Endothelial cell of umbilical vein (primary cell): ENCODE measurements at regions of chr4 and their contacts with region 1.

Region 1: GRCh38 chr4:151227731-151228130 is 49.2 kb upstream of the PRSS48 start:
- DNase-seq: peak; percentile 99
- H3K4me3 ChIP-seq: peak overlapping the region; percentile 2 to 79 (median 38)
- H3K27ac ChIP-seq: peak overlapping the region; percentile 80
- H3K4me1 ChIP-seq: peaks cover 33% of the 10 kb centered on the region
- H3K27me3 ChIP-seq: no peaks in the 10 kb centered on the region
- CTCF ChIP-seq: no peak
- POLR2A ChIP-seq: peak; percentile 71

Region 2: DNA sequence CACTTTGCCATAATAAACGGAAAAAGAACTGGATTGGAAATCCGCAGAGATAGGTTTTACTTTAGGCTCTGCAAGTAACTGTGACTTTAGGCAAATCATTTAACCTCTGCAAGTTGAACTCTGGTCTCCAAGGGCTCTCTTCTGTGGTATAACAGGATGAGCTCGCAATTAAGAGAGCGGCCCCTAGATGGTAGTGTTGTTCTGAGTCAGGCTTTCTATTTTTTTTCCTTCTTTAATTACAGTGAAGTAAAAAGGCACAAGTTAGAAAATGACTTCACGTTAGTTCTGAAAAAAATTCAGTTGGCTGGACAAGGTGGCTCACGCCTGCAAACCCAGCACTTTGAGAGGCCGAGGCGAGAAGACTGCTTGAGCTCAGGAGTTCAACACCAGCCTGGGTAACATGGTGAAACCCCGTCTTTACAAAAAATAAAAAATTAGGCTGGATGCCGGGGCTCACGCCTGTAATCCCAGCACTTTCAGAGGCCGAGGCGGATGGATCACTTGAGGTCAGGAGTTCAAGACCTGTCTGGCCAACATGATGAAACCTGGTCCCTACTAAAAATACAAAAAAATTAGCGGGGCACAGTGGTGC is 110.3 kb before region 1 on chr4:
- CTCF ChIA-PET with region 1: interaction called, 6 read pairs
- POLR2A ChIA-PET with region 1: no interaction called
- dilution Hi-C with region 1: no loop called
- intact Hi-C with region 1: loop called (anchors 1 kb)
- DNase-seq: peak; percentile 86
- H3K4me3 ChIP-seq: no peak overlapping the region
- H3K27ac ChIP-seq: no peak overlapping the region
- H3K4me1 ChIP-seq: no peaks in the 10 kb centered on the region
- H3K27me3 ChIP-seq: no peaks in the 10 kb centered on the region
- CTCF ChIP-seq: peak; percentile 53 to 61
- POLR2A ChIP-seq: no peak

Region 3: DNA sequence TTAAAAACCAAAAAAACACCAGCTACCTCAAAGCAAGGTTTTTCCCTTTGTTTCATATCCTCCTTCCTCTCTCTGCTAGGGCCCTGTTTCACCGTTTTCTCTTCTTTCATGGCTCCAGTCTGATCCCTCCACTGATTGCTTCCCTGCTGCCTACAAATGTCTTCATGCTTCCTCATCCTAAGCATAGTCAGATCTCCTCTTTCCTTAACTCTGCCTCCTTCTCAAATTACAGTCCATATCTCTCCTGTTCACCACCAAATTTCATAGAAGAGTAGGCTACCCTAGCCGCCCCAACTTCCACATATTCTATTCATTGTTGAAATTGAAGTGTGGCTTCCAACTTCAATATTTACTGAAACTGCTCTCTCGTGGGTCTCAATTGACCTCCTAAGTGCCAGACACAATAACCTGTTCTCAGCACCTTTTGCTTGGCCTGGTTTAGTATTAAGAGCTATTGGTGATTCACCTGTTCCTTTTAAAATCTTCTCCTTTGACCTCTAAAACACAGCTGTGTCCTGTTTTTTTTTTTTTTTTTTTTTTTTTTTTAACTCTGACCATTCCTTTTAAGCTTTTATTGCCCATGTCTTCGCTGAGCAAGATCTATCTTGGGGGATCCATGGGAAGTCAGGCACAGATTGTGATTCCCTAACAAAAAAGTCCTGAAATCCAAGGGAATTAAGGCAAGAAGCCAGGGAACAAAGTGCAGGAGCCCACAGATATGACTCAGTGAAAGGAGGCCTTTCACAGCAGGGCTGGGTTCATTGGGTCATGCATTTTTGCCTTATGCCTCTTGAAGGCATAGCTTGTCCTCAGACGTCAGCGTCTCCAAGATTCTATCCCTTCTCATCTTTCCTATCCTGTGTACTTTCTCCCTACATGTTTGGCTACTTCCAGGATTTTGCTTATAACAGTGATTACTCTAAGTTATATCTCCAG is 42.9 kb before region 1 on chr4:
- CTCF ChIA-PET with region 1: no interaction called
- POLR2A ChIA-PET with region 1: no interaction called
- dilution Hi-C with region 1: no loop called
- intact Hi-C with region 1: loop called (anchors 5 kb)
- DNase-seq: peak; percentile 89
- H3K4me3 ChIP-seq: no peak overlapping the region
- H3K27ac ChIP-seq: no peak overlapping the region
- H3K4me1 ChIP-seq: peaks cover 11% of the 10 kb centered on the region
- H3K27me3 ChIP-seq: no peaks in the 10 kb centered on the region
- CTCF ChIP-seq: no peak
- POLR2A ChIP-seq: no peak

Region 4: GRCh38 chr4:151215295-151215694 is 12.4 kb before region 1 on chr4:
- CTCF ChIA-PET with region 1: interaction called, 6 read pairs
- POLR2A ChIA-PET with region 1: interaction called, 3 read pairs
- dilution Hi-C with region 1: no loop called
- intact Hi-C with region 1: loop called (anchors 1 kb)
- DNase-seq: peak; percentile 97
- H3K4me3 ChIP-seq: no peak overlapping the region
- H3K27ac ChIP-seq: peak overlapping the region; percentile 38
- H3K4me1 ChIP-seq: peaks cover 34% of the 10 kb centered on the region
- H3K27me3 ChIP-seq: no peaks in the 10 kb centered on the region
- CTCF ChIP-seq: no peak
- POLR2A ChIP-seq: peak; percentile 40

Region 5: GRCh38 chr4:151325111-151325948 is 97.6 kb after region 1 on chr4 and contains the start of gene SH3D19:
- CTCF ChIA-PET with region 1: interaction called, 4 read pairs
- POLR2A ChIA-PET with region 1: interaction called, 3 read pairs
- dilution Hi-C with region 1: no loop called
- intact Hi-C with region 1: loop called (anchors 1 kb)
- DNase-seq: peak; percentile 91
- H3K4me3 ChIP-seq: peak within 1 kb of the TSS; percentile 55 to 86 (median 74)
- H3K27ac ChIP-seq: peak within 1 kb of the TSS; percentile 69
- H3K4me1 ChIP-seq: peaks cover 24% of the 10 kb centered on the region
- H3K27me3 ChIP-seq: no peaks in the 10 kb centered on the region
- CTCF ChIP-seq: no peak
- POLR2A ChIP-seq: peak; percentile 30
- total RNA-seq, gene SH3D19: 86.3 and 92.8 TPM in 2 replicates

Region 6: DNA sequence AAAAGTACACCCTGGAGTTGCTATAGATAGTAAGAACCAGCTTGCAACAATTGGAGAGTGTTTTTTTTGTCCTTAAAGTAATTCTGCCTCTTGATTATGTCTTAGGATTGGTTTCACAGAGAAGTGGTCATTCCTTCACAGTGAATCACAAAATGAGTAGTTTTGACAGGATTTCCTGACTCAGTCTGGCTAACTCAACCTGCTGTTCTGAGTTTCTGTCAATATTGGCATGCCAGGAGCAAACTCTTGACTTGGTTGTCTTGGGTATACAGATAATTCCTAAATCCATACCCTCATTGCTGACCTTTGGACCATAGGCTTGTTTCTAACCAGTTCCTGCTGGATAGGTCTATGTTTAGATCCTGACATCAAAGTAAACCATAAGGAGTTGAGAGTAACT is 190.7 kb after region 1 on chr4:
- CTCF ChIA-PET with region 1: no interaction called
- POLR2A ChIA-PET with region 1: no interaction called
- dilution Hi-C with region 1: no loop called
- intact Hi-C with region 1: loop called (anchors 1 kb)
- DNase-seq: peak; percentile 91
- H3K4me3 ChIP-seq: no peak overlapping the region
- H3K27ac ChIP-seq: peak overlapping the region; percentile 89
- H3K4me1 ChIP-seq: peaks cover 43% of the 10 kb centered on the region
- H3K27me3 ChIP-seq: no peaks in the 10 kb centered on the region
- CTCF ChIP-seq: no peak
- POLR2A ChIP-seq: peak; percentile 35